ENCODE measurements at regions of chr15 and their contacts with region 1.

Region 1: GRCh38 chr15:63504247-63504978 is at the start of gene USP3:
- DNase-seq: peak; percentile 88 to 96 (median 92)
- ATAC-seq: peak; percentile 72
- H3K4me3 ChIP-seq: peak within 1 kb of the TSS; percentile 81 to 86
- H3K4me3 Mint-ChIP-seq: peak within 1 kb of the TSS; percentile 98
- H3K27ac ChIP-seq: peak within 1 kb of the TSS; percentile 94 to 99
- H3K27ac Mint-ChIP-seq: peak within 1 kb of the TSS; percentile 100
- H3K4me1 ChIP-seq: peaks cover 77% of the 10 kb centered on the region
- H3K4me1 Mint-ChIP-seq: peaks cover 78% of the 10 kb centered on the region
- H3K27me3 ChIP-seq: no peaks in the 10 kb centered on the region
- H3K27me3 Mint-ChIP-seq: no peaks in the 10 kb centered on the region
- CTCF ChIP-seq: no peak
- total RNA-seq, gene USP3: 264 to 275 TPM

Region 2: GRCh38 chr15:63473999-63474809 is 30.2 kb before region 1 on chr15:
- CTCF ChIA-PET with region 1: interaction called, 69 read pairs
- POLR2A ChIA-PET with region 1: interaction called, 121 read pairs
- intact Hi-C with region 1: loop called (anchors 1 kb)
- DNase-seq: peak in 7 of 9 experiments; percentile 22 to 83 (median 60)
- ATAC-seq: peak; percentile 74
- H3K4me3 ChIP-seq: no peak overlapping the region
- H3K4me3 Mint-ChIP-seq: no peak overlapping the region
- H3K27ac ChIP-seq: no peak overlapping the region
- H3K27ac Mint-ChIP-seq: peak overlapping the region; percentile 94
- H3K4me1 ChIP-seq: peaks cover 43% of the 10 kb centered on the region
- H3K4me1 Mint-ChIP-seq: peaks cover 50% of the 10 kb centered on the region
- H3K27me3 ChIP-seq: no peaks in the 10 kb centered on the region
- H3K27me3 Mint-ChIP-seq: no peaks in the 10 kb centered on the region
- CTCF ChIP-seq: no peak

Region 3: GRCh38 chr15:63487076-63487757 is 17.2 kb before region 1 on chr15:
- CTCF ChIA-PET with region 1: interaction called, 92 read pairs
- POLR2A ChIA-PET with region 1: interaction called, 121 read pairs
- intact Hi-C with region 1: loop called (anchors 1 to 2 kb)
- DNase-seq: peak; percentile 83 to 95 (median 88)
- ATAC-seq: peak; percentile 97
- H3K4me3 ChIP-seq: no peak overlapping the region
- H3K4me3 Mint-ChIP-seq: peak overlapping the region; percentile 40
- H3K27ac ChIP-seq: no peak overlapping the region
- H3K27ac Mint-ChIP-seq: peak overlapping the region; percentile 80
- H3K4me1 ChIP-seq: peaks cover 48% of the 10 kb centered on the region
- H3K4me1 Mint-ChIP-seq: peaks cover 62% of the 10 kb centered on the region
- H3K27me3 ChIP-seq: no peaks in the 10 kb centered on the region
- H3K27me3 Mint-ChIP-seq: no peaks in the 10 kb centered on the region
- CTCF ChIP-seq: peak; percentile 98

Region 4: DNA sequence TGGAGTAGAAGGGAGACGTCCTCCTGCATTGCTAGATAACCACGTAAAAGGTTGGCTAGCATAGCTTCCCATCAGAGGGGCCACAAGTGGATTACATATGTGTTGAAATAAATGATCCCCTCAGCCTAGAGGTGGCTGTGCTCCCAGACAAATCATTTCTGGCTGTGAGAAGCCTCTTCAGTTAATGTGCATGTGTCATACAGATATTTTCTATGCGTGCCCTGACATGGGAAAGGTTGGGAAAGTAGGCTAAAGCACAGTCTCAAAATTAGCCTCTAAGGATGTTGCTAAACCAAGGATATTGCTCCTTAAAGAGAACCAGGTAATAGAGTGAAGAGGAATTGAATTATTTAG is 17.8 kb after region 1 on chr15:
- CTCF ChIA-PET with region 1: interaction called, 15 read pairs
- POLR2A ChIA-PET with region 1: interaction called, 15 read pairs
- intact Hi-C with region 1: no loop called
- DNase-seq: no peak
- ATAC-seq: no peak
- H3K4me3 ChIP-seq: no peak overlapping the region
- H3K4me3 Mint-ChIP-seq: peak overlapping the region; percentile 19
- H3K27ac ChIP-seq: no peak overlapping the region
- H3K27ac Mint-ChIP-seq: no peak overlapping the region
- H3K4me1 ChIP-seq: peaks cover 87% of the 10 kb centered on the region
- H3K4me1 Mint-ChIP-seq: peaks cover 91% of the 10 kb centered on the region
- H3K27me3 ChIP-seq: no peaks in the 10 kb centered on the region
- H3K27me3 Mint-ChIP-seq: no peaks in the 10 kb centered on the region
- CTCF ChIP-seq: no peak

Region 5: GRCh38 chr15:63539521-63539920 is 35.1 kb after region 1 on chr15:
- CTCF ChIA-PET with region 1: interaction called, 17 read pairs
- POLR2A ChIA-PET with region 1: interaction called, 12 read pairs
- intact Hi-C with region 1: loop called in 1 of 2 experiments (anchors 5 kb)
- DNase-seq: no peak
- ATAC-seq: no peak
- H3K4me3 ChIP-seq: no peak overlapping the region
- H3K4me3 Mint-ChIP-seq: no peak overlapping the region
- H3K27ac ChIP-seq: no peak overlapping the region
- H3K27ac Mint-ChIP-seq: no peak overlapping the region
- H3K4me1 ChIP-seq: peaks cover 27% of the 10 kb centered on the region
- H3K4me1 Mint-ChIP-seq: peaks cover 61% of the 10 kb centered on the region
- H3K27me3 ChIP-seq: no peaks in the 10 kb centered on the region
- H3K27me3 Mint-ChIP-seq: no peaks in the 10 kb centered on the region
- CTCF ChIP-seq: no peak

Region 6: DNA sequence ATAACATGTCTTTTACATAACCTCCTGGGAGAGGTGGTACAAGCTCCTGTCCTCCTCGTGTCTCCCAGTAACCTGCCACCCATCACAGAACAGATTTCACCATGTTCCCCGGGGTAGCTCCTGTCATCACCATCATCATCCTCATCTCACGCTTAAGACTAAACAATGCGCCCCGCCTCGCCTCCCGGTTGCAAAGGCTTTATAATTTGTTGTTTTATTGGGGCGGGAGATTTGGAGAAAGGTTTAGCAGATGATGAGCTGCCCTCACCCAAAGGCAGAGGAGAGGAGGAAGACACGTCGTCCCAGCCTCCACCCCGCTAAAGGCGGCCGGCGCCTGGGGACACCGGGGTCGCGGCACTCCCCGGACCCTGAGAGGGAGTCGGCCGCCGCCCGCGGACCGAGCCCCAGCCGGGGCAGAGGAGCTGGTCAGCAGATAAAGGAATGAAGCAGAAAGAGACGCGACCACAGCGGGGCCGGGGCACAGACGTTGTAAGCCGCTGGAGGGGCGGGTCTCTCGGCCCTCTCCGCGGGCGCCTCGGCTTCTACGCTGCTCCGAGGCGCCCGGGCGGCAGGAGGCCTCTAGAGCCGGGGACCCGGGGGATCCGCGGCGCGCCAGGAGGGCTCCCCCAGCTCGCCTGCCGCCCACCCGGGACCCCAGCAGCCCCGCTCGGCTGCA is 328.7 kb after region 1 on chr15:
- CTCF ChIA-PET with region 1: no interaction called
- POLR2A ChIA-PET with region 1: no interaction called
- intact Hi-C with region 1: loop called in 1 of 2 experiments (anchors 10 kb)
- DNase-seq: peak in 7 of 9 experiments; percentile 10 to 59 (median 28)
- ATAC-seq: peak; percentile 34
- H3K4me3 ChIP-seq: peak overlapping the region; percentile 93 to 99
- H3K4me3 Mint-ChIP-seq: peak overlapping the region; percentile 98
- H3K27ac ChIP-seq: peak overlapping the region; percentile 92 to 98
- H3K27ac Mint-ChIP-seq: peak overlapping the region; percentile 94
- H3K4me1 ChIP-seq: peaks cover 40% of the 10 kb centered on the region
- H3K4me1 Mint-ChIP-seq: peaks cover 56% of the 10 kb centered on the region
- H3K27me3 ChIP-seq: no peaks in the 10 kb centered on the region
- H3K27me3 Mint-ChIP-seq: no peaks in the 10 kb centered on the region
- CTCF ChIP-seq: no peak

Region 7: GRCh38 chr15:64460206-64460734 is 955.9 kb after region 1 on chr15 and contains the start of gene ZNF609:
- CTCF ChIA-PET with region 1: no interaction called
- POLR2A ChIA-PET with region 1: no interaction called
- intact Hi-C with region 1: loop called (anchors 2 to 5 kb)
- DNase-seq: peak; percentile 81 to 91 (median 85)
- ATAC-seq: peak; percentile 79
- H3K4me3 ChIP-seq: peak within 1 kb of the TSS; percentile 62 to 70
- H3K4me3 Mint-ChIP-seq: peak within 1 kb of the TSS; percentile 92
- H3K27ac ChIP-seq: peak within 1 kb of the TSS; percentile 32 to 69
- H3K27ac Mint-ChIP-seq: peak within 1 kb of the TSS; percentile 89
- H3K4me1 ChIP-seq: peaks cover 84% of the 10 kb centered on the region
- H3K4me1 Mint-ChIP-seq: peaks cover 84% of the 10 kb centered on the region
- H3K27me3 ChIP-seq: no peaks in the 10 kb centered on the region
- H3K27me3 Mint-ChIP-seq: no peaks in the 10 kb centered on the region
- CTCF ChIP-seq: no peak
- total RNA-seq, gene ZNF609: 40.1 to 40.7 TPM